Activated T-helper 1 cell treated with anti-CD3 and anti-CD28 coated beads, Interleukin-12 subunit alpha, Interleukin-12 subunit beta, Interleukin-2, Interleukin-4 antibody, amounts not matched to agents 30 ng/mL and 10 ng/mL and 1 ng/mL, durations not matched to agents 14 hours and 24 hours and 36 hours (primary cell): ENCODE measurements at regions of chr10 and their contacts with region 1.

Region 1: DNA sequence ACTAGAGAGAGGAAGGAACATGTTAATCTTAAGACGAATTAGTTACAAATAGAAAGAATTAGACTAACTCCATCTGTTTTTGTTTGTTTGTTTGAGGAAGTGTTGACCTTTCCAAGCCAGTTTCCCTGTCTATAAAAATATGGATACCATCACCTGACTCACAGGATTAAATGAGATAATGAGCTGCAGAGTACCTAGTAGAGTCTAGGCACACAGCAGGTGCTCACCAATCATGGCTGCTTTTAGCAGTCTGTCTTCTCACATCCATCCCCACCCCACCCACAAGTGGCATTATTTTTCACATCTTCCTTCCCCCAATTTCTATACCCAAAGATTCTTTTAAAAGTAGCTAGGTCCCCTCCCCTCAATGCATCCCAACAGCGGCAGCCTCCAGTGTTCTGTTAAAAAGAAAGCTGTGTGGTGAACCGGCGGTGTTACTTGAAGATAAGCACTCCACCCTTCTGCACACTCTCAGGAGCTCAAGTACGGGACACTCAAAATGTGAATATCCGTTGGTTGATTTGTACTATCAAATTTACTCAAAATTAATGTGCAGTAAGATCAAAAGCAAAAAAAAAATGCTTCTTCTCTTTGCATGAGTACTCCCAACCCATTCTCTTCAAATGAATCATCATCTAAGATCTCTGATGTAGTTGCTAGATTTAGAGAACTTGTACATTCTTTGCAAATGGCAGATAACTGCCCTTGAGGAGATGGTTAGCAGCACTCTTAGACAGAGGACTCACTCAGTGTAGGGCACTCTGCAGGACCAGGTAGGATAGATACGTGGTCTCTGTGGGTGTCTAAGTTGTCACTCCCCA is 145.4 kb upstream of the ASAH2 start:
- DNase-seq: no peak
- H3K4me3 Mint-ChIP-seq: peak overlapping the region; percentile 71
- H3K27ac Mint-ChIP-seq: peak overlapping the region; percentile 88
- H3K4me1 Mint-ChIP-seq: peaks cover 37% of the 10 kb centered on the region
- H3K27me3 Mint-ChIP-seq: peaks cover 1% of the 10 kb centered on the region

Region 2: DNA sequence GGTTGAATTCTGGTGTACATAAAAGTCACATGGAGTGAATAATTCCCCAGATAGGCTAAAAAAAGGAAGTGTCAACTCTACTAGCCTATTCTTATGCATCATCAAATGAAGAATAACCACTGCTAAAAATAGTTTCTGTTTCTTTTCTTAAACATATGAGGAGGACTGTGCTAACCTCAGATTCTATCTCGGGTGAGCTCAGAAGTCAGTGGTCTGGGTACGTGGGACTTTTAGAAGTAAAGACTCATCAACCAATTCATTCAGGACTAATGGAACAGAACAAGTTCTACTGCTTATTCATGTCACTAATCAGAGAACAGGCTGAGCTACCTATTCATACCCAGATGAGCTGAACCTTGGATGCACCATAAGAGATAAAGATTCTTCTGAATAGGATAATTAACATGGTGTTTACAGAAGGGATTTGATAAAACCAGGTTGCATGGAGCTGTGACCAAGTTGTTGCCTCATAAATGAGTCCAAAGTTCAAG is 135.9 kb before region 1 on chr10:
- intact Hi-C with region 1: loop called (anchors 5 kb)
- DNase-seq: no peak
- H3K4me3 Mint-ChIP-seq: no peak overlapping the region
- H3K27ac Mint-ChIP-seq: peak overlapping the region; percentile 23
- H3K4me1 Mint-ChIP-seq: peaks cover 20% of the 10 kb centered on the region
- H3K27me3 Mint-ChIP-seq: peaks cover 27% of the 10 kb centered on the region

Region 3: DNA sequence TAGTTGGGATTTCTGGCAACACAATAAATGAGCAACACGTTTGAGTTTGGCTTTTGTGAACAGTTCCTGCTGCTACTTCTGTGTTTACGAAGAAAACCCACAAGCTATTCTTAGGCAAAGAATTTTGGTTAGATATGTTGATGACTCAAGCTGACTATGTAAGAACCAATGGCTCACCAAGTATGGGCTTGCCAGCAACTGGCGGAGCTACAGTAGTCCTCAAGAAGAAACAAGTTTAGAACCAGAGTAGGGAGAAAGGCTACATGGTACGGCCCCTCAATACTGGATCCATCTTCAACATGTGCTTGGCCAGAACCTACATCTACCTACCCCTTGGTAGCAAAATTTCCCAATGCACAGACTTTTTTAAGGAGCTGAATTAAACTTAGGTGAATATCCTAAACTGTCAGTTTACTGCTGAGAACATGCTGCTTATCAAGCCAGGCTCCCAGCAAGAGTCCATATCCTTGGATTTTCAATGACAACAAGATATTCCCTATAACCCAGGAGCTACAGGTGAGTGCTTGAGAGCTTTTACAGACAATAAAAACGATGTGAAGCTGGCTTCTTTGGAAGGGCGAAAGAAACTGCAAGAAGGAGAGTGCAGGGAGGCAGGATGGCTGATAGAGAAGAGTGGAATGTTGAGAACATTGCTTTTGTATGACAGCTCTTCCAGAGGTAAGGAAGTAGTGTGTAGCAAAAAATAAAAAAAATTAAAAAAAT is 71.1 kb before region 1 on chr10:
- intact Hi-C with region 1: loop called (anchors 2 kb)
- DNase-seq: peak; percentile 15
- H3K4me3 Mint-ChIP-seq: peak overlapping the region; percentile 79
- H3K27ac Mint-ChIP-seq: peak overlapping the region; percentile 19
- H3K4me1 Mint-ChIP-seq: peaks cover 74% of the 10 kb centered on the region
- H3K27me3 Mint-ChIP-seq: no peaks in the 10 kb centered on the region

Region 4: DNA sequence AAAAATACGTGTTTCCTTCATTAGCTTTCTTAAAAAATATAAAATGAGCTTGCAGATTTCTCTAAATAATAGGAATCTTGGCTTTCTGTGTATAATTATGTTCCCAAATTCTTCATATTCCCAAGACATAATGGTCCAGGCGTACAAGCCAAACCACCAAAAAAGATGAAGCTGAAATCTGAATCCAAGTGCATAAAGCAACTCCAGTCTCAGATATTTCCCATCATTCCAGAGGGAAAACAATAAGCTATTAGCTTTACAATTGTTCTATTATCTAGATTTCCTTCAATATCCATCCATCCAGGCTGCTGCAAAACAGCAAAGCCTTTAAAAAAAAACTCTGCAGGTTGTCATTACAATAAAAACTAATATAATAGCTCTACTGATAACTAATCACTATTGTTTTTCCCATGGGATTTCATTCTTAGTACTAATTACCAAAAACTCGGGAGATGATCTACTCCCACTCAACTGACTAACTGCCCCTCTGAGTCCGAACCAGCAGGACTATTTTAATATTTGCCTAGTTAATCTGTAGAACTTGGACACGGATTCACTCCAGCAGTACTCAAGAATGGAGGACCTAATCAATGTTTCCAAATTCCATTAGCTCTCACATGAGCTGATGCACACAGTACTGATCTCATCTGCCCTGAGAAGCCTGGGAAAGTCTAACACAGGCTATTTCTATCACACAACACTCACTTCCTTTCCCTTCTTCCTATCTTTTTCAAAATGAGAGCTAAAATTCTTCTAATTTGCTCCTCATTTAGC is 36.4 kb before region 1 on chr10:
- intact Hi-C with region 1: no loop called
- DNase-seq: no peak
- H3K4me3 Mint-ChIP-seq: no peak overlapping the region
- H3K27ac Mint-ChIP-seq: no peak overlapping the region
- H3K4me1 Mint-ChIP-seq: peaks cover 13% of the 10 kb centered on the region
- H3K27me3 Mint-ChIP-seq: no peaks in the 10 kb centered on the region